ENCODE measurements at regions of chr17 and their contacts with region 1.

Region 1: DNA sequence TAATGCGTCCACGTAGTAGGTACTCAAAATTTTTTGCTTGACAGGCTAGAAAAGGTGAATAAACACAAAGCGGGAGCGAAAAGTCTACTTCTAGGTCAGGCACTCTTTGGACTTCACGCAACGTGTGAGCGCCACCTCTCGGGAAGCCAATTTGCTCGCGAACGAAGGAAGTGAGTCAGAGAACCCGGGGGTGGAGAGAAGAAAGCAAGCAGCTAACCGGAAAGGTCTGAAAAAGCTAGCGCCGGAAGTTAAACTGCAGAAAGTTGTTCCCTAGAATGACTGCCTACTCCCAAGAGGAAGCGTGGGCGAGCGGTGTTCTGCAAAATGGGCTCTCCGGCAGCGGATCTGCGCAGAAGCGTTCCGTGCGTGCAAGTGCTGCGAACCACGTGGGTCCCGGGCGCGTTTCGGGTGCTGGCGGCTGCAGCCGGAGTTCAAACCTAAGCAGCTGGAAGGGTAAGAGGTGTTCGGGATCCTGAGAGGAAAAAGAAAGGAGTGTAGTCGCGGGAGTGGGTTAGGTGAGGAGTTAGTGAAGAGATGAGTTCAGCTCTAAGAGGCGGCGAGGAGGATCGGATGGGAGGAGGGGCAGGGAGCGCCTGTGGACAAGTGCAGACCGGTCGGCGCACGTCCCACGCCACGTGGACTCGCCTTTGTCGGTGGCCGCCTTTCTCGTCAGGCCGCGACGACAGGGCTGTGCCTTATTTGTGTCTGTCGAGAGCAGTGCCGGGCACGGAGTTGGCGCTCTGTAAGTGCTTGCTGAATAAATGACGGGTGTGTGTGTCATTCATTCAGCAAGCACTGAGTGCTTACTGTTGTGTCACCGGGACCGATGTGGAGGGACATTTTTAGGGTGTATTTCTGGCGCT is at the start of gene NME1:
- H3K4me3 Mint-ChIP-seq: no peak within 1 kb of the TSS
- H3K27ac Mint-ChIP-seq: no peak within 1 kb of the TSS
- H3K4me1 Mint-ChIP-seq: no peaks in the 10 kb centered on the region
- H3K27me3 Mint-ChIP-seq: no peaks in the 10 kb centered on the region

Region 2: GRCh38 chr17:51000835-51001638 is 152.4 kb before region 1 on chr17:
- intact Hi-C with region 1: loop called (anchors 1 kb)
- H3K4me3 Mint-ChIP-seq: no peak overlapping the region
- H3K27ac Mint-ChIP-seq: no peak overlapping the region
- H3K4me1 Mint-ChIP-seq: no peaks in the 10 kb centered on the region
- H3K27me3 Mint-ChIP-seq: no peaks in the 10 kb centered on the region

Region 3: DNA sequence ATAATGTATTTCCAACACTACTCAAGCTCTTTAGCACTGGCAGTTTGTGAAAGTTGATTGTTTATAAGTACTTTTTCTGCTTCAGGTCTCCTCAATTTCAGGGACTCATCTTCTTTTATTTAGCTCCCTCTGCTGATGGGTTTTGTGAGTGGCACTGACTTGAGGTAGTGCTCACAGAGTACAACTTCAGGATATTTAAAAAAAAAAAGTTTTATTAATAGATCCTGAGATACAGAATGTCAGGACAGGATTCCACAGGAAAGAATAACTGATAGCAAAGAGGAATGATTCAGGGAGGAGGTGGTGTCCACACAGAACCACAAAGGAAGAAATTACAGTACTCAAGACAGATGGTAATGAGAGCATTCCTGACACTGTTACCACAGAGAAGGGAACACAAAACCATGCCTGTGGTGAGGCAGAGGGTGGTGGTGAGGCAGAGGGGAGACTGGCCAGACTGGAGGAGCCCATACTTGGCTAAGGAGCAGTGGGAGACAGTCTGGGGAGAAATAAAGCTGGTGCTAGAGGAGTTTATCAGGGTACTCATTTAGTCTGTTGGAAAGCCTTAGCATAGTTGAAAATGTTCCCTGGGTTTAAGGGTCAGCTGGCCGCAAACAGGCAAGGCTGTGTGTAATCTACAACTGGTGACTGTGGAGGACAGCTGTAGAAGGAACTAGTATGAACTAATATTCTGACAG is 96.5 kb before region 1 on chr17:
- intact Hi-C with region 1: loop called (anchors 10 kb)
- H3K4me3 Mint-ChIP-seq: no peak overlapping the region
- H3K27ac Mint-ChIP-seq: peak overlapping the region; percentile 80
- H3K4me1 Mint-ChIP-seq: peaks cover 14% of the 10 kb centered on the region
- H3K27me3 Mint-ChIP-seq: no peaks in the 10 kb centered on the region

Region 4: DNA sequence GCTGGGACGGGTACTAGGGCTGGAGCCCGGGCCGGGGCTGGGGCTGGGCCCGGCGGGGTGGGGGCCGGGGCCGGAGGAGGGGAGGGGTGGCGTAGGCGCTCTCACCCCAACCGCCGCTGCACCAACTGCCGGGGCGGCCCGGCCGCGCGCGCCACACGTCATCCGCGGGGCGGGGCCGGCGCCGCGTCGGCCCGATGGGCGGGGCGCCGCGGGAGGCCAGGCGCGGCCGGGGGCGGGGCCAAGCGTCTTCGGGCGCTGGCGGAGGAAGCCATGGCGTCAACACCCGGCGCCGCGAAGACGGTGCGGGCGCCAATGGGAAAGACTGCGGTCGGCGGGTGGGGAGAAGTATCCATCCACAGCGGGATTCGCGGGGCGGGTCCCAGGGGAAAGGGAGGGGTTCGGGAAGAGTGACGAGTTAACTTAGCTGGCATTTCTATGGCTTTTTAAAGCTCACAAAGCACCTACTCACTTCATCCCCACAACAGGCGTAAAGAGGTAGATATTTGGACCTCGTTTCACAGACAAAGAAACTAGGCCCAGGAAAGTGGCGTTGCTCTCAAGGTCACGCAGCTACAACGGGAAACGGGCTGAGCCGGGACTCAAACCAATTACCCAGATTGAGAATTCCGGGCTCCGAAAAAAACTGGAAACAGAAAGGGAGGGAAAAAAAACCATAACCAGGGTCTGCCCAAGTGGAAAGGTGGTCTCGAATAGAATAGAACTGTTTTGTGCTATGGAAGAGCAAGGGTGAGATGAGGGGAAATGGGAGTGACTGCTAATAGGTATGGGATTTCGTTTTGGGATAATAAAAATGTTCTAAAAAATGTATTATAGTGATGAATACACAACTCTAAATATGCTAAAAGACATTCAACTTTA is 32.5 kb before region 1 on chr17 and contains the start of gene SPAG9:
- intact Hi-C with region 1: loop called (anchors 1 kb)
- H3K4me3 Mint-ChIP-seq: peak within 1 kb of the TSS; percentile 98
- H3K27ac Mint-ChIP-seq: peak within 1 kb of the TSS; percentile 99
- H3K4me1 Mint-ChIP-seq: peaks cover 58% of the 10 kb centered on the region
- H3K27me3 Mint-ChIP-seq: no peaks in the 10 kb centered on the region

Measured in dendritic cell treated with granulocyte-macrophage colony-stimulating factor and Interleukin-4, amounts not matched to agents 40 ng/mL and 50 ng/mL, for 4 days (primary cell).